Mammary epithelial cell (primary cell): ENCODE measurements at regions of chr7 and their contacts with region 1.

Region 1: DNA sequence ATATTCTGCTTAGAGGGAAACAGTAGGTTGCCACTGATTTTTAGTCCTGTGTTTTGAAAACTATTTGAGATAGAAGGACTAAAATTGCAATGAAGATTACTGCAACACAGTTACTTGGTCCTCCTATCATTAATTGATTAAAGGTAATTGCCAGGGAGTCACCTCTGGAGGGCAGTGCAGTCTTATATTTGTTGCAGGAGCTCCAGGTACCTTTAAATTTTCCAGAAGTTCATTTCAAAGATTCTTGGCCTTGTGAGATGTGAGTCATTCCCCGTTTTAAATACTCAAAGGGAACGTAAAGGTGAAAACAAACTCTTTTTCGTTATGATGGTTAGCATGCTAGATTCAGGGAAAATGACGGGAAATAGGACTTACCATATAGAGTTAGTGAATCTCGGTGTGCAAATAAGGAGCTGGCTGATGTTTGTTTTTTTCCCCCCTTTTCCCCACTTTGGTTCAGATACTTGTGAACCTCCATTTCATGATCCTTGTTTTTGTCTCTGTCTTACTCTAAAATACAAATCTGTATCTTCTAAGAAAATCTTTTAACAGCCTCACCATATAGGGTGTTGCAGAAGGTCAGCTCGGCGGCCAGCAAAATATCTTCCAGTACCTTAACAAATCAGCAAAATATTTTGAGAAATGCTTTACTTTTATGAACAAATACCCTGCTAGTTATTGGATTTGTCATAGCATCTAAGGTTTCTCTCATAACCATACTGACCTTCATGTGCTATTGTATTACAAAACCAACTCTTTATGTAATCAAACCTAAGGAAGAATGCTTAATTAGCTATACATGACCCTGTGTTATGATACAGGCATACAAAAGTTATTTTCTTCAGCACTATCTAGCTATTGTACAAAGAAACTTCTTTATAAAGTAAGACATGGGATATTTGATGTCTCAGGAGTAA is 143.0 kb upstream of the HDAC9 start:
- DNase-seq: peak; percentile 67
- H3K4me3 ChIP-seq: peak overlapping the region in 1 of 3 experiments; percentile 26
- H3K27ac ChIP-seq: no peak overlapping the region
- H3K4me1 ChIP-seq: no peaks in the 10 kb centered on the region
- H3K27me3 ChIP-seq: no peaks in the 10 kb centered on the region
- CTCF ChIP-seq: peak; percentile 69 to 70

Region 2: DNA sequence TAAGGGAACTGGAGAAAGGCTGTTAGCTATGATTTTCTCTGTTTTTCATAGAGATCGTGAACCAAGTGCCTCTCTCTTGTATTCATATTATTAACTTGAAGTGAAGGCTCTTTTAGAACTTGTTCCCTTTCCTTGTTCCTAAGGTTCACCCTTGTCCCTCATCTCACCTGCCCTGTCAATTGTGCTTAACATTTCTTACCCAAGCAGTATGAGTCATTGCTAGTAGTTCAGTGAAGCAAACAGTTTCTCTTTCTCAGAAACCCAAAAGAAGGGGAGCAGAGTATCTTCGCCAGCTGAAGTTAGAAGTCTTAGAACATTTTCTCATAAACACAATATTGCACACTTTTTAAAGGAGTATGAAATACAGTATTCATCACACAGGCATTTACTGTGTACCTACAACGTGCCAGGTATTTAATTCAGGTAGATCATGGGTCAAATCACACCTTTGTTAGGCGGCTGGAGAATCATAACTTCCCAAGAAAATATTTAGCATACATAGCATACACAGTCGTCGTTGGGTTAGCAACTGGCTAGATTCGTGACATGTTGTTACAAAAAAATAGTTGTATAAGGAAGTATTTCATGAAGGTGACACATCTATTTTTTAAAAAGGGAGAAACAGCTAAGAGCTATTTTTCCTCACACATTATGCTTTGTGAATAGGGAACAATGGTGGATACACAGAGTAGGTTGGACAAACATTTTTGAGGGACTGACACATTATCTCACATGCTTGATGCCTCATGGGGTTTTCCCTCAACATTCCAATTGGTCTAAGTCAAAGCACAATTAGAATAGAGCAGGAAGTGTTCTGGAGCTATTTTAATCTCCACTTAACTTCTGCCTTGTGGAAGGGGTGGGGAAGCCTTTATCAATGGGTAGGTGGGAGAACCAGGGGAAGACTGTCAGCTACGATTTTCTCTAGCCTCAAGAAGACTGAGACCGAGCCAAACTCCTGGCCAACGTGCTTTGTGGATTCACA is 156.1 kb after region 1 on chr7:
- CTCF ChIA-PET with region 1: no interaction called
- dilution Hi-C with region 1: no loop called
- in situ Hi-C with region 1: loop called in 1 of 2 experiments (anchors 25 kb)
- intact Hi-C with region 1: loop called (anchors 1 kb)
- DNase-seq: peak; percentile 98
- H3K4me3 ChIP-seq: peak overlapping the region; percentile 69 to 81 (median 74)
- H3K27ac ChIP-seq: peak overlapping the region; percentile 100
- H3K4me1 ChIP-seq: peaks cover 13% of the 10 kb centered on the region
- H3K27me3 ChIP-seq: no peaks in the 10 kb centered on the region
- CTCF ChIP-seq: no peak

Region 3: DNA sequence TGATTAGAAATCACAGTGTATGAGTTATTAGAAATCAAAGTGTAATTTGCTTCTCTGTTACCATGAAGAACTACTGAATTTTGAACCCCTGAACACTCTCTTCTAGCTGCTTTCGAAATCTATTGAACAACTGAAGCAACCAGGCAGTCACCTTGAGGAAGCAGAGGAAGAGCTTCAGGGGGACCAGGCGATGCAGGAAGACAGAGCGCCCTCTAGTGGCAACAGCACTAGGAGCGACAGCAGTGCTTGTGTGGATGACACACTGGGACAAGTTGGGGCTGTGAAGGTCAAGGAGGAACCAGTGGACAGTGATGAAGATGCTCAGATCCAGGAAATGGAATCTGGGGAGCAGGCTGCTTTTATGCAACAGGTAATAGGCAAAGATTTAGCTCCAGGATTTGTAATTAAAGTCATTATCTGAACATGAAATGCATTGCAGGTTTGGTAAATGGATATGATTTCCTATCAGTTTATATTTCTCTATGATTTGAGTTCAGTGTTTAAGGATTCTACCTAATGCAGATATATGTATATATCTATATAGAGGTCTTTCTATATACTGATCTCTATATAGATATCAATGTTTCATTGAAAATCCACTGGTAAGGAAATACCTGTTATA is 313.6 kb after region 1 on chr7:
- CTCF ChIA-PET with region 1: interaction called, 9 read pairs
- dilution Hi-C with region 1: no loop called
- in situ Hi-C with region 1: no loop called
- intact Hi-C with region 1: loop called (anchors 2 kb)
- DNase-seq: peak; percentile 52
- H3K4me3 ChIP-seq: no peak overlapping the region
- H3K27ac ChIP-seq: no peak overlapping the region
- H3K4me1 ChIP-seq: peaks cover 22% of the 10 kb centered on the region
- H3K27me3 ChIP-seq: no peaks in the 10 kb centered on the region
- CTCF ChIP-seq: peak; percentile 97

Region 4: DNA sequence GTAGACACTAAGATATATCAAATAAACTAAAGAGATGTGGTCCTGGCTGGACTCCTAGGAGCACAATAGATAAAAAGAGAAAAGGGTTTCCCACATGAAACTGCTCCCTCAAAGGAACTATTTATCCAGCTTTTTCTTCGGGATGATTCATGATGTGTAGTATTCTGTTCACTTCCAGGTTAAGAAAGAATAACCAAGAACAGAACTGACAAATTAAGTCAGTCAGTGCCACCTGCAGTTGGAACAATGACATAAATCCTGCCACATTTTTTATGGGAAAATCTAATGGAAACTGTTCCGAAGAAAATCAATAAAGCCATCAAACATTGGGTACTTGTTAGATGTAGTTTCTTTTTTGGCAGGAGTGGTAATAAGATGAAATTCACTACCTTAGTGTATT is 1269.1 kb after region 1 on chr7:
- CTCF ChIA-PET with region 1: no interaction called
- dilution Hi-C with region 1: no loop called
- in situ Hi-C with region 1: no loop called
- intact Hi-C with region 1: loop called (anchors 1 kb)
- DNase-seq: peak; percentile 58
- H3K4me3 ChIP-seq: no peak overlapping the region
- H3K27ac ChIP-seq: no peak overlapping the region
- H3K4me1 ChIP-seq: no peaks in the 10 kb centered on the region
- H3K27me3 ChIP-seq: no peaks in the 10 kb centered on the region
- CTCF ChIP-seq: peak; percentile 23 to 51